ENCODE measurements at regions of chr13 and their contacts with region 1.

Region 1: DNA sequence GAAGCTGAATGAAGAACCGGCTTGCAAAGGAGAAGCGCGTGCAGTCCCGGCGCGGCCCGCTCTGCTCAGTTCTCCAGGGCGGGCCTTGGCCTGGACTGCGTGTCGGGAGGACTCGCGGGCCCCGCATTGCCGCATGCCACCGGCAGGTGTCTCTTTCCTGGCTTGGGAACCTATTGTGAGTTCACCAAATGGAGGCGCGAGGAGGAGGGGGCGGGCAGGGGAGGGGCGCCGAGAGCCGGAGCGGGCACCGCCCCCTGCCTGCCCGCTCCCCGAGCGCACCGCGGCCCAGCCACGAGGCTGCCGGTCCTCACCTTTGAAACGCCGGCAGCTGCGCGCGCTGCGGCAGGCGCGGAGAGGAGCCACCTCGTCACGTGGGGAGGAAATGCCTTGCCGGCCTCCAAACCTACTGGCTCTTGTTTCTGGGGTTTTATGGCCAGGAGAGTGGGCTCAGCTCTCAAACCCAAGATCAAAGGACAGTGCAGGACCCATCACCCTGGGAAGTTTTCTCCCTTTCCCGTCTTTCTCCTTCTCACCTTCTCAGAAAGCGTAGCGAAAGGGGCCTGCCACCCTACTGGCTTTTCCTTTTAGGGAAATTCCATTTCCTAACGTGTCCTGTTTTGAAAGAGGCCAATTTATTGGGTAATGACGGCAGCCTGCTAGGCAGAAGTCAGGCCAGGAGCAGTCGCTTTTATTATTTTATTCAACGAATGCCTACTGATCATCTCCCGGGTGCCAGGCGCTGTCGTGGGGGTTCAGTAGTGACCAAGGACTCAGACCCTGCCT is 13.8 kb upstream of the UBE2L5 start:
- H3K4me3 Mint-ChIP-seq: peak overlapping the region; percentile 64
- H3K27ac Mint-ChIP-seq: peak overlapping the region; percentile 90
- H3K4me1 Mint-ChIP-seq: peaks cover 26% of the 10 kb centered on the region
- H3K27me3 Mint-ChIP-seq: peaks cover 4% of the 10 kb centered on the region

Region 2: DNA sequence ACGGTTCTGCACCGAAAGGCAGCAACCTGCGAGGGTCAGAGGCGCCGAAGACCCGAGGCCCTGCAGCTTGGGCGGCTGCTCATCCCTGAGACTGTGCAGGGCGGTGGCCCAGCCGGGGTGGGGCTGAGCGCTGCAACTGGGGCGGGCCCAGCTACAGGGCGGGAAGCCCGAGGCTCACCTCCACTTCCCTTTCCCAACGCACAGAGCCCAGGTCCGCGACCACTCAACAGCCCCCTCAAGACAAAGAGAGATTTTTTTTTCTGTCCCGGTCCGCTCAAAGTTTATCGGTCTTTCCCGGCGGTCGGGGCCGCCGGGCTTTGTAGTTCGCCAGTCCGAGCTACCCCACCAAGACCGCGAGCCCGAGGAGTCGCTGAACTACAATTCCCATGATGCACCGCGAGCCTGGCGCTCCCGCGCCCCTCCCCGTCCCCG is 101.7 kb before region 1 on chr13:
- intact Hi-C with region 1: loop called (anchors 5 kb)
- H3K4me3 Mint-ChIP-seq: peak overlapping the region; percentile 92
- H3K27ac Mint-ChIP-seq: peak overlapping the region; percentile 92
- H3K4me1 Mint-ChIP-seq: peaks cover 46% of the 10 kb centered on the region
- H3K27me3 Mint-ChIP-seq: no peaks in the 10 kb centered on the region

Region 3: DNA sequence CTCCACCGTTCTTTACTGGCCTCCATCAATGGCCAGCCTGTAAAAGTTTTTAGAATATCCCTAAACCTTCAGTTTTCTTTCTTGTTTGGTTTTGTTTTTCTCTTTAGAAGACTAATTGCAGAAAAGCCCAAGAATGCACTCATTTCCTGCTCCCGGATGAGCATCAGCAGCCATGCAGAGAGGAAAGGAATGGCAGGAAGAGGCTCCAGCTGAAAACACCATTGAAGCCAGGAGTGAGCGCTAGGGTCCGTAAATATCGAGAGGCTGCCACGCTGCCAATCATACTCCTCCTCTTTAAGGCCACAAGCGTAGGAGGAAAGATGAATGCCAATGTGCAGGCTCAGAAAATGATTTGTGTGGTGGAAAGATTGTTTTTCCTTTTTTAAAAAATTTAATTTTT is 43.6 kb before region 1 on chr13:
- intact Hi-C with region 1: loop called (anchors 5 kb)
- H3K4me3 Mint-ChIP-seq: no peak overlapping the region
- H3K27ac Mint-ChIP-seq: peak overlapping the region; percentile 32
- H3K4me1 Mint-ChIP-seq: peaks cover 59% of the 10 kb centered on the region
- H3K27me3 Mint-ChIP-seq: no peaks in the 10 kb centered on the region

Measured in dendritic cell treated with granulocyte-macrophage colony-stimulating factor and Interleukin-4, amounts not matched to agents 40 ng/mL and 50 ng/mL, for 4 days (primary cell).